ENCODE measurements at regions of chr16 and their contacts with region 1.

Region 1: DNA sequence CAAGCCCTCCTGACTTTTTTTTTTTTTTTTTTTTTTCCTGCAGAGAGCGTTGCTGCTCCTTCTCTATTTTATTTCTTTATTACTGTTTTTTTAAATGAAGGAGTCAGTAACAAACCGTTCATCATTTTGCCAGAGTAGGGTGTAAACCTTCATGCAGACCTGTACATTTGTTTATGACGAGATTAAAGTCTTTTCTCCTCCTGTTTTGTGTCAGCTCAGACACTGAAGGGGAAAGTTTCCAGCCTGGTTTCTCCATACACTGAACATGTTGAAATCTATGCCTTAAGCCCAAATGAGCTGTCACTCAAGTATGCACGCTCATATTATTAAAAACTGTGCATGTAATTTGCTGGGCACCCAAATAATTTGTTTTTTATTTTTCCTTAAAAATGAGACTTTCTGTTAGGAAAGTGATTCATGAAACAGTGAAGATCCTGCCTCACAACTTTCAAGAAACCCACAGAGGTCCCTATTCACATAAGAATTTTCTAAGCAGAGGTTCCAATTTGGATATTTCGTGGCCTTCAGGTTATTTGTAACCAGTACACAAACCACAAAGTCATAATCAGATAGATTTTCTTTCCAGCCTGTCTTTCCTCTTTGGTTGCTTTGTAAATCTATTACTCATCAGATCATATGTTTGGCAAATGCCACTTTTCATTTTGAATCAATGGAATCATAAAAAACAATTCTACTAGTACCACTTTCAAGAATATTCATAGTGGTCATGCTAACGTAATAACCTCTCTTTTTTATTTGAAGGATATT is 700.3 kb downstream of the MAF start:
- DNase-seq: no peak
- H3K4me3 Mint-ChIP-seq: no peak overlapping the region
- H3K27ac Mint-ChIP-seq: peak overlapping the region; percentile 28
- H3K4me1 Mint-ChIP-seq: peaks cover 37% of the 10 kb centered on the region
- H3K27me3 Mint-ChIP-seq: no peaks in the 10 kb centered on the region

Region 2: DNA sequence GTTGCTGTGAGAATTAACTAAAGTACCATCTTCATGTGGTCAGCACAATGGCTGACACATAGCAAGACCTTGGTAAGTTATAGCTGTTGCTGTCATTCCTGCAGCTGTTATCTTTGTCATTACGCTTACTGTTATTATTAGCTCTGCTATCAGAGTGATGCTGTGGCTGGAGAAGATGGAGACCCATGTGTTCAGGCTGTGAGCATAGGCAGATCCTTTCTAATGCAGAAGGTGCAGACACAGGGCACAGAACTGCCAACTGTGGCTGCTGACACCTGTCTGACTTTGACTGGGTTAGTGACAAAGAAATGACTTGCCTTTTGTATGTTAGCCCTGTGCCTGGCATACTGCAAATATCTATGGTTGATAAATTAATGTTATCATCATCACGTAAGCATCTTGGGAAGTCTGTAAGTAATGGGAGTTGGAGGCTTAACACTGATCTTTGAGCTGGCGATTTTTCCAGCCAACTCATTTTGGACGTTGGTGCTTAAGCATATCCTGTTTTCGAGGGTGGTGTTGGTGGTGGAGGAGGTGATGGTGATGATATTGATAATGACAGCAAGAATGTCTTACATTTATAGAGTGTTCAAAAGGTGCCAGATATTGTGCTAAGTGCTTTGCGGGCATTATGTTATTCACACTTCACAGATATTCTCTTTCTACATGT is 105.5 kb before region 1 on chr16:
- intact Hi-C with region 1: loop called (anchors 1 kb)
- DNase-seq: no peak
- H3K4me3 Mint-ChIP-seq: no peak overlapping the region
- H3K27ac Mint-ChIP-seq: peak overlapping the region; percentile 69
- H3K4me1 Mint-ChIP-seq: peaks cover 33% of the 10 kb centered on the region
- H3K27me3 Mint-ChIP-seq: no peaks in the 10 kb centered on the region

Region 3: GRCh38 chr16:78962457-78962929 is 62.3 kb after region 1 on chr16:
- intact Hi-C with region 1: loop called (anchors 1 kb)
- DNase-seq: no peak
- H3K4me3 Mint-ChIP-seq: no peak overlapping the region
- H3K27ac Mint-ChIP-seq: peak overlapping the region; percentile 6
- H3K4me1 Mint-ChIP-seq: peaks cover 12% of the 10 kb centered on the region
- H3K27me3 Mint-ChIP-seq: no peaks in the 10 kb centered on the region

Region 4: GRCh38 chr16:79008036-79008868 is 108.0 kb after region 1 on chr16:
- intact Hi-C with region 1: loop called (anchors 1 kb)
- DNase-seq: no peak
- H3K4me3 Mint-ChIP-seq: no peak overlapping the region
- H3K27ac Mint-ChIP-seq: peak overlapping the region; percentile 54
- H3K4me1 Mint-ChIP-seq: peaks cover 24% of the 10 kb centered on the region
- H3K27me3 Mint-ChIP-seq: no peaks in the 10 kb centered on the region